Left ventricle myocardium inferior (tissue), 1 donor: ENCODE measurements at regions of chr15 and their contacts with region 1.

Region 1: DNA sequence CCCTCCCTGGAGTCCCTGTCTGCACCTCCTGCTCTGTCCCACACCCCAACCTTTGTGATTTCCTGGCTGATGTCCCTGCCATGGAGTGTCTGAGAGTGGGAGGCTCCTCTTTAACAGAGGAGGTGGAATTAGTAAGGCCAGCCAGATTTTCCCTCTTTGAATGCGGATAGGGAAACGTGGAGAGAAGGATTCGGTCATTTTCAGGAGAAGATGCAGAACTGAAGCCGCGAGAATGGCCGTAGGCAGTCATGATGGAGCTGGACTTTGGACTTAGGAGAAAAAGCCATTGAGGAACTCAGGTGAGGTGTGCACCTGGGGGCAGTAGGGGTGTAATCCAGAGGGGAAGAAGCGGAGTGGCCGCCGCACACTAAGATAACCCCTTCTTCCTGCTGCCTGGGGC is 138.1 kb upstream of the ATP10A start:
- DNase-seq: no peak
- H3K4me3 ChIP-seq: no peak overlapping the region
- H3K27ac ChIP-seq: no peak overlapping the region
- H3K4me1 ChIP-seq: no peaks in the 10 kb centered on the region
- H3K27me3 ChIP-seq: peaks cover 18% of the 10 kb centered on the region
- CTCF ChIP-seq: no peak

Region 2: DNA sequence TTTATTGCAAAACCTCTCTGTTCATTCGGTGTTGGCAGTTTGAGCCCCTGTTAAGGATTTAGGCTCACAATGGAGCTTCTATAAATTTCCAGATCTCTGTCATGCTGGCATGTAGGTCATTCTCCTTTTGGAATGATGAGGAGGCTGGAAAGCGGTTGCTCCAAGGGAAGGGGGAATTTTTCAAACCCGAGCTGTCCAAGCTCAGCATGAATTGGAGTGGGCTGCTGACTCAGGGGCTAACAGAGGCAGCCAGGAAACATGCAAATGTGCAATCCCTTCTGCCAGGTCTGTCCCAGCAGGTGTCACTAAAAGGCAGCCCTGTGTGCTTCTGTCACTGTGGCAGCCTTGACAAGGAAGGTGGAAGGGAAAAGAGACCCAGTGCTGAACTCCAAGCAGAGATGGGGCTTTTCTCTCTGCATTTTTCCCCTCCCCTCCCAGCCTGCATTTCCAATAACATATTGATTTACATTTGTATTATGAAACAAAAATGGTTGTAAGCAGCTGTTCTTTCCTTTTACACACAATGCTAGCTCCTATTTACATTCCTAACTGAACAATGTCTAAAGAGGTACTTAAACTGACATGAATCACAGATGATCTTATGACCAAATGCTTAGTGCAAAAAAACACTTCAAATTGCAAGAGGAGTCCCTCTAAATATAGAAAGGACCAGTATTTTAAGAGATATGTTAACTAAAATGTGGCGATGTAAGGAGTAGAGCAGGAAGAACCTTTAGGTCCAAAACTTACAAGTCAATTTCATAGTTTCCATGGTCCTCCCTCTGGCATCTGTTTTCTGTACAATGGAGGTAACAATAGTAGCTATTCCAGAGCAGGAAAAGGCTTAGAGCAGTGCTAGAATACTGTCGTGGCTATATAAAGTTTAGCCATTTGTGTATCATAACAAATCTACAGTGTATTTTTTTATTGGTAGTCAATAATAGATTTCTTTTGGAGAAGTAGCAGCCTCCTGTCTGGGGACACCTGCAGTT is 53.6 kb before region 1 on chr15:
- intact Hi-C with region 1: loop called (anchors 10 kb)
- DNase-seq: no peak
- H3K4me3 ChIP-seq: no peak overlapping the region
- H3K27ac ChIP-seq: no peak overlapping the region
- H3K4me1 ChIP-seq: no peaks in the 10 kb centered on the region
- H3K27me3 ChIP-seq: peaks cover 15% of the 10 kb centered on the region
- CTCF ChIP-seq: no peak

Region 3: GRCh38 chr15:26144836-26145235 is 143.6 kb after region 1 on chr15:
- intact Hi-C with region 1: no loop called
- DNase-seq: no peak
- H3K4me3 ChIP-seq: no peak overlapping the region
- H3K27ac ChIP-seq: no peak overlapping the region
- H3K4me1 ChIP-seq: no peaks in the 10 kb centered on the region
- H3K27me3 ChIP-seq: peaks cover 38% of the 10 kb centered on the region
- CTCF ChIP-seq: no peak